ENCODE measurements at regions of chr19 and their contacts with region 1.

Region 1: DNA sequence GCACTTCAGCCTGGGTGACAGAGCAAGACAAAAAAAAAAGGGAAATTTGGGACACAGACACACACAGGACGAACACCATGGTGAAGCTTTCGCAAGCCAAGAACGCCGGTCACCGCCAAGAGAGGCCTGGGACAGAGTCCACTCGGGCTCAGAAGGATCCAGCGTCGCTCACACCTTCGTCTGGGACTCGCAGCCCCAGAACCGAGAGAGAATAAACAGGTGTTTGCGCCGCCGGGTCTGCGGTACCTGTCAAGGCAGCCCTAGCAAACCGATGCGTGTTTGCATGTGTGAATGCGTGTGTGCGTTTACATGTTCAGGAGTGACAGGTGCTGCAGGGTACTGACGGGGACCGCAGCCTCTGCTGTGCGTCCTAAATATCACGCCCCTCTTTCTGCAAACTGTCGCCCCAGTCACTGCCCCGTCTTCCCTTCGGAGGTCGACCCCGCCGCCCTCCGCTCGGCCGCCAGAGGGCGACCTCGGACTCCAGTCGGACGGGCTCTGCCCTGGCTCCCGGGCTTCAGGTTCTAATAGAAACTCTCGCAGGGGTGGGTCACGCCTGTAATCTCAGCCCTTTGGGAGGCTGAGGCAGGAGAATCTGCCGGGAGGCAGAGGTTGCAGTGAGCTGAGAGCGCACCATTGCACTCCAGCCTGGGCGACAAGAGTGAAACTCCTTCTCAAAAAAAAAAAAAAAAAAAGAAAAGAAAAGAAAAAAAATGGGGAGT is 11.8 kb upstream of the CSNK1G2 start:
- DNase-seq: peak; percentile 65
- ATAC-seq: peak; percentile 89
- H3K4me3 ChIP-seq: peak overlapping the region; percentile 48 to 71 (median 49)
- H3K27ac ChIP-seq: no peak overlapping the region
- H3K4me1 ChIP-seq: peaks cover 7% of the 10 kb centered on the region
- H3K27me3 ChIP-seq: no peaks in the 10 kb centered on the region
- CTCF ChIP-seq: peak; percentile 93
- EP300 ChIP-seq: no peak
- POLR2A ChIP-seq: no peak
- RAD21 ChIP-seq: peak; percentile 80

Region 2: GRCh38 chr19:1700002-1700732 is 229.0 kb before region 1 on chr19:
- CTCF ChIA-PET with region 1: no interaction called
- POLR2A ChIA-PET with region 1: no interaction called
- in situ Hi-C with region 1: no loop called
- intact Hi-C with region 1: no loop called
- DNase-seq: no peak
- ATAC-seq: peak; percentile 79
- H3K4me3 ChIP-seq: no peak overlapping the region
- H3K27ac ChIP-seq: no peak overlapping the region
- H3K4me1 ChIP-seq: peaks cover 15% of the 10 kb centered on the region
- H3K27me3 ChIP-seq: peaks cover 6 to 48% of the 10 kb centered on the region in 2 experiments
- CTCF ChIP-seq: no peak
- EP300 ChIP-seq: no peak
- POLR2A ChIP-seq: no peak
- RAD21 ChIP-seq: no peak

Region 3: GRCh38 chr19:1905071-1905862 is 23.9 kb before region 1 on chr19 and contains the starts of genes ADAT3 and SCAMP4:
- CTCF ChIA-PET with region 1: no interaction called
- POLR2A ChIA-PET with region 1: interaction called, 3 read pairs
- in situ Hi-C with region 1: no loop called
- intact Hi-C with region 1: loop called (anchors 1 kb)
- DNase-seq: peak; percentile 94
- ATAC-seq: peak; percentile 80
- H3K4me3 ChIP-seq: peak within 1 kb of the TSS; percentile 62 to 75 (median 74); a peak in 5 of 6 replicates
- H3K27ac ChIP-seq: peak within 1 kb of the TSS; percentile 69
- H3K4me1 ChIP-seq: peaks cover 78% of the 10 kb centered on the region
- H3K27me3 ChIP-seq: no peaks in the 10 kb centered on the region
- CTCF ChIP-seq: no peak
- EP300 ChIP-seq: peak in 1 of 2 experiments; percentile 53; a peak in 2 of 4 replicates
- POLR2A ChIP-seq: peak; percentile 65 to 84
- RAD21 ChIP-seq: peak; percentile 37; the same call in 1 of the 2 replicates
- total RNA-seq, gene ADAT3: 2.0 and 3.5 TPM in 2 replicates
- total RNA-seq, gene SCAMP4: 10.8 and 13.7 TPM in 2 replicates

Region 4: DNA sequence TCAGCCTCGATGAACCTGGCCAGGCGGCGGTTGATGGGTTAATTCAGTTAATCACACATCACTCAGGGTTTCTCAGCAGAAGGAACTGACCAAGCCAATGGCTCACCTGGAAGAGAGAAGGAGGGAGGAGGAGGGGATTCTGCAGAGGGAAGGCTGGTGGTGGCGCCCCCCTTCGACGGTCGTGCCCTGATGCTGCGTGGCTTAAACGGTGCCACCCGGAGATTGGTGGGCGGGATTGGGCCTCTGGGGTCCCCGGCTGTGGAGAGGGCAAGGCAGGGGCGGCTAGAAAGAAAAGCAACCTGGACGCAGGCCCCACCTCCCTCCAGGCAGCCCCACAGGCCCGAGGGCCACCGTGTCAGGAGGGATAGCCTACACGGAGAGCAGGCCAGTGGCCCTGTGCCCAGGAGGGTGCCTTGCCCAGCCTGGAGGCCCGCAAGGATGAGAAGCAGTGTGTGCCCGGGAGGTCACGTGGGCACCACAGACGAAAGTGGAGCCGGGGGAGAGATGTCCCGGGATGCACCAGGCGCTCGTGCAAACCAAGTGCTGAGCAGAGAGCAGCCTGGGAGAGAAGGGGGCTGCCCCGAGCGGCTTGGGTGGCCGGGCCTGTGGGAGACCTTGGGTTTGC is 27.8 kb after region 1 on chr19:
- CTCF ChIA-PET with region 1: no interaction called
- POLR2A ChIA-PET with region 1: no interaction called
- in situ Hi-C with region 1: no loop called
- intact Hi-C with region 1: no loop called
- DNase-seq: no peak
- ATAC-seq: no peak
- H3K4me3 ChIP-seq: no peak overlapping the region
- H3K27ac ChIP-seq: no peak overlapping the region
- H3K4me1 ChIP-seq: no peaks in the 10 kb centered on the region
- H3K27me3 ChIP-seq: no peaks in the 10 kb centered on the region
- CTCF ChIP-seq: no peak
- EP300 ChIP-seq: no peak
- POLR2A ChIP-seq: no peak
- RAD21 ChIP-seq: no peak